MCF 10A (cell line): ENCODE measurements at regions of chr3 and their contacts with region 1.

Region 1: GRCh38 chr3:45182915-45183867 is 37.0 kb upstream of the CDCP1 start:
- DNase-seq: peak; percentile 94
- H3K4me3 Mint-ChIP-seq: no peak overlapping the region
- H3K27ac Mint-ChIP-seq: peak overlapping the region; percentile 93
- H3K4me1 Mint-ChIP-seq: peaks cover 36% of the 10 kb centered on the region
- H3K27me3 Mint-ChIP-seq: no peaks in the 10 kb centered on the region
- CTCF ChIP-seq: no peak

Region 2: DNA sequence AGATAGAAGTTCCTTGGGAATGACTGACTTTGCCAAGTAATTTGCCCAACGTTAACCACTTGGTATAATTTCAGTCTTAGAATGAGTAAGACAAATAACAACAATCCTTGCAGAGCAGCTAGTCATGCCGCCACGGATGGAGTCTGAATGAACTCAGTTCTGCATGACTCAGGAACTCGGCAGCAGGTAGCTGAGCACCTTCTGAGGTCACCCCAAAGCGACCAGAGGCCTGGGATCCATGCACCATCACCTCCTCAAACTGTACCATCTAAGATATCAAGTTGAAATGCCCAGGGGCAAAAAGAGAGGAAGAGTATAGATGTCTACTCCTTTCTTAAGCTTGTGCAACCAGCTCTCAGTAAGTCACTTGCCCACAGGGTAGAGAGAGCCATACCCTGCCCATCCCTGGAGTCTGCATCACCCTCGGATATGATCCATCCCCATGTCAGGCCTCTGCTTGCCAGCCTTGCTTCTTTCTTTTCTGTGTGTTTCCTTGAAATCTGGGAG is 28.5 kb before region 1 on chr3:
- CTCF ChIA-PET with region 1: no interaction called
- POLR2A ChIA-PET with region 1: interaction called, 17 read pairs
- intact Hi-C with region 1: no loop called
- DNase-seq: peak; percentile 75
- H3K4me3 Mint-ChIP-seq: no peak overlapping the region
- H3K27ac Mint-ChIP-seq: peak overlapping the region; percentile 63
- H3K4me1 Mint-ChIP-seq: peaks cover 12% of the 10 kb centered on the region
- H3K27me3 Mint-ChIP-seq: no peaks in the 10 kb centered on the region
- CTCF ChIP-seq: no peak

Region 3: DNA sequence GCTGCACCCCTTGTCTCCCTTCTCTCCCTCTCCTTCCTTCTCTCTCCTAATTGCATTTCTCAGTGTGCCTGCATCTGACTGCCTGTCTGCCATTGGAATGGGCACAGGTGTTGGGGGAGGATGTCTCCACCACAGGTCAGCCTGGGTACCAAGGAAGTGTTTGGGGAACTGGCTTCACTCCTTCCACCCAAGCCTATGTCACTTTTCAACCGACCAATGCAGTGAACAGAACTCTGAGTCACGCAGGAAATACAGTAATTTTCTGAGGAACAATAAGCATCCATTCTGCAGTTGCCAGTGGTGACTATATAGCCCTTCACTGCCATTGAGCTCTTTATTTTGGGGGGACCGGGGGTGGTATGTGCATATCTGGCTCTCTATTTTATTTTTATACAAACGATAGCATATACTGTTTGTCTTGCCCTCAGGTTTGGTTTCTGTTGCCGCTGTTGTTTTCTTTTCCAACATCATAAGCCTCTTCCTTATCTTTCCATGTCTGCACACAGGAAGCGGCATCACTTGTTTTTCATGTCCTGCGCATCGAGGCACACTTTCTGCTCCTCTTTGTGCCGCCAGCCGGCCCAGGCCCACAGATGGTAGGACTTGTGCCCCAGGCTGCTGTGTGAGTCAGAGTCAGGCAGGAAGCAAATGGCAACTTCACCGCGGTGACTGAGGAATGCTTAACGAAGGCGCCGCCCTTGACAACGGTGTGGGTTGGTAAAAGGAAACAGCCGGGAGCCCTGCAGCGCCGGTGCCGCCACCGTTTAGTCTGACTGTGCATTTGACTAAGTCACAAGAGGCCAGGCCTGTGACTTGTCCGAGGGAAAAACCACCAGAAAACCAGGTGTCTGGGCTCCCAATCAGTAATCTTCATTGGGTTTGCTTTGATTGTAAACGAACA is 15.9 kb before region 1 on chr3:
- CTCF ChIA-PET with region 1: interaction called, 5 read pairs
- POLR2A ChIA-PET with region 1: interaction called, 28 read pairs
- intact Hi-C with region 1: loop called (anchors 1 kb)
- DNase-seq: peak; percentile 97
- H3K4me3 Mint-ChIP-seq: peak overlapping the region; percentile 24
- H3K27ac Mint-ChIP-seq: peak overlapping the region; percentile 94
- H3K4me1 Mint-ChIP-seq: peaks cover 30% of the 10 kb centered on the region
- H3K27me3 Mint-ChIP-seq: no peaks in the 10 kb centered on the region
- CTCF ChIP-seq: no peak

Region 4: GRCh38 chr3:45199837-45200648 is 16.9 kb after region 1 on chr3:
- CTCF ChIA-PET with region 1: interaction called, 6 read pairs
- POLR2A ChIA-PET with region 1: interaction called, 35 read pairs
- intact Hi-C with region 1: loop called (anchors 1 kb)
- DNase-seq: peak; percentile 94
- H3K4me3 Mint-ChIP-seq: no peak overlapping the region
- H3K27ac Mint-ChIP-seq: peak overlapping the region; percentile 63
- H3K4me1 Mint-ChIP-seq: peaks cover 22% of the 10 kb centered on the region
- H3K27me3 Mint-ChIP-seq: no peaks in the 10 kb centered on the region
- CTCF ChIP-seq: no peak

Region 5: DNA sequence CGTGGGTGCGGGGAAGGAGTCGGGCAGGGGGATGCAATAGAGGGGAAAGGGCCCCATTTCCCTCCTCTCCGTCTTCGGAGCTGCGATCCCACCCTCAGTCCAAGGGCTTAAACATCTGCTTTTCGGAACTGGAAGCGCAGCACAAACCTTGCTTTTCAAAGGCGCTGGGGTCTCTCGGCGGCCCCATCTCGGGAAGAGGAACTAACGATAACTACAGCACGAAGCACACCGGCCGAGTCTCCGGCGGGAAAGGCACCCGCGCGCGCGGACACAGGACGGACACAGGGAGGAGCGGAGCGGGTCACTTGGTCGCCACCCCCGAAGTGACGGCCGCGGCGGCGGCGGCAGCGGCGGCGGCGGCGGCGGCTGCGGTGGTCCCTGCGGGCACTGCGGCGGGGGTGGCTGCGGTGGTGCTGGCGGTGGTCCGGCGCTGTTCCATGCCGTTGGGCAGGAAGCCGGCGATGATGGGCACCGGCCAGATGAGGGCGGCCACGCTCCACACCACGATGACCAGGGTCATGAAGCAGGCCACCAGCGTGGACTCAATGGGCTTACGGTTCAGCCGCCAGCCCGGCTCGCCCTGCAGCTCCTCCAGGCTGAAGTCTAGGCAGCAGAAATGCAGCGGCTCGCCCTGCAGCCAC is 41.8 kb after region 1 on chr3:
- CTCF ChIA-PET with region 1: no interaction called
- POLR2A ChIA-PET with region 1: no interaction called
- intact Hi-C with region 1: no loop called
- DNase-seq: peak; percentile 67
- H3K4me3 Mint-ChIP-seq: peak overlapping the region; percentile 77
- H3K27ac Mint-ChIP-seq: no peak overlapping the region
- H3K4me1 Mint-ChIP-seq: peaks cover 6% of the 10 kb centered on the region
- H3K27me3 Mint-ChIP-seq: peaks cover 29% of the 10 kb centered on the region
- CTCF ChIP-seq: peak; percentile 64